Ascending aorta (tissue), 2 donors: ENCODE measurements at regions of chr13 and their contacts with region 1.

Region 1: DNA sequence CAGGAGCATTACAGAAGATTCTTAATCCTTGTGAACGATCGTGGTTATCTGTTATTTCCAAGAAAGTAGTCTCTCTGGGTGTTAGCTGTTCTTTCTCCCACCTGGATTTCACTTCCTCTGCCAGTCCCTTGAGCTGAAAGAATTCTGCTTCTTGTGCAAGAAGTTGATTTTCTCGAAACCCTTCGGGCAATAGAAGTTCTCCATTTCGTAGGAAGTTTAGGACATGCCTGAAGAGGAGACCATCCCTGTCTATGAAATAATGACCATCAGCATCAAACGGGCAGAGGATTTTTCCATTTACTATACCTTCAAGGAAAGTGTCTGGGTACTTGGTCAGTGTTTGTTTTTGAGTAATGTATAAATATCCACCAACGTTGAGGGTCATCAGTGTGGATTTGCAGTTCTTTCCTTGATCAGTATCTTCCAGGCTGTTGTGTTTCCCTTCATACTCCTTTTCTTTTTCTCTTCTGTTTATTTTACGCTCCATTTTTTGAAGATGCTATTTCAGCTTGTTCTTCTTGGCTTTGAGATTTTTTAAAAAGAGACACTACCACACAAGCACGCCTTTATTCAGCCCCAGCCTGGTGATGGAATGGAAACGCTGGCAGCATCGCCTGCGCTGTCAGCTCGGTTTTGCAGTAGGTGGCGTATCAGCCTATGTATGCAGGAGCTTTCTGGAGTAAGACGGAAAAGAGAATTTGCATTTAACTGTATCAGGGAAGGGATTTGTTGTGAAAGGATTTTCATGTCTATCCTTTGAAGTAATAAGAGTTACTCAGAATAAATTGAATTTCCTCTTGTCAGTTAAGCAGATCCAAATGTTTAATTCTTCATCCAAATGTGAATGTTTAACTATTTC is 6.5 kb downstream of the KCTD4 start:
- DNase-seq: peak in 1 of 2 donors; percentile 73
- H3K4me3 ChIP-seq: no peak overlapping the region
- H3K27ac ChIP-seq: no peak overlapping the region
- H3K4me1 ChIP-seq: peaks cover 0 to 12% of the 10 kb centered on the region in 2 donors
- H3K27me3 ChIP-seq: no peaks in the 10 kb centered on the region
- CTCF ChIP-seq: peak; percentile 5 to 60 (median 38)

Region 2: GRCh38 chr13:44449999-44450708 is 744.2 kb before region 1 on chr13:
- intact Hi-C with region 1: no loop called
- DNase-seq: no peak
- H3K4me3 ChIP-seq: no peak overlapping the region
- H3K27ac ChIP-seq: no peak overlapping the region
- H3K4me1 ChIP-seq: no peaks in the 10 kb centered on the region
- H3K27me3 ChIP-seq: no peaks in the 10 kb centered on the region
- CTCF ChIP-seq: no peak

Region 3: DNA sequence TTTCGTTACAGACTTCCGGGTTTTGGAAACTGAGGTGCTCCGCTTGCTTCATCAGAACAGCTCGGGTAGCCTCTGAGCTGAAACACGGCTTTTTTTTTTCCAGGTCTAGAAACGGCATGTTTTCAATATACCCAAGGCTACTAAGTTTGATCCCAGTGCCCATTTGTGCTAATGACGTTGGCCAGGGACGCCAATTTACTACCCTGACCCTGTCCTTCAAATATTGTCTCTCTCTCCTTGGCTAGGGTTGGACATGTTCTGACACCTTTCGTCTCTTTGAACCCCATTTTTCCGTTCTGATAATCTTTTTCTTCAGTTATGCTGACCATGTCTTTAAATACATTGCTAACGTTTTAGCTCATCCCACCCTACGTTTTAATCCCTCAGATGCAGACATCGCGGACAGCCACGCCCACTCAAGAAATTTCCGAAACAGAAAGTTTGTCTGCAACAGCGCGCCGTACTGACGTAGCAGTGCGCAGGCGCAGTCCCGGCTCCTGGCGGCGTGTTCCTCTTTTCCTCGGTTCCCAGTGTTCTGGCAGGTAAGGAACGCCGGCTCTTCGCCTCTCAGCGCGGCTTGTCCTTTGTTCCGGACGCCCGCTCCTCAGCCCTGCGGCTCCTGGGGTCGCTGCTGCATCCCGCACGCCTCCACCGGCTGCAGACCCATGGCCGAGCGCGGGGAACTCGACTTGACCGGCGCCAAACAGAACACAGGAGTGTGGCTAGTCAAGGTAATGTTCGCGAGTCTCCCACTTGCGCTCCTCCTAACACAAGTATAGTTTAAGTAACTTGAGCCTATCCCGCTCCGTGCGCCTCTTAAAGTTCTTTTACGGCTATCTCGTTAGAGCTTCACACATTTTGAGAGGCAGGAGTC is 74.1 kb before region 1 on chr13 and contains the start of gene GTF2F2:
- intact Hi-C with region 1: no loop called
- DNase-seq: peak; percentile 47 to 92
- H3K4me3 ChIP-seq: peak within 1 kb of the TSS; percentile 71 to 94
- H3K27ac ChIP-seq: peak within 1 kb of the TSS; percentile 75
- H3K4me1 ChIP-seq: peaks cover 0 to 15% of the 10 kb centered on the region in 2 donors
- H3K27me3 ChIP-seq: no peaks in the 10 kb centered on the region
- CTCF ChIP-seq: no peak
- total RNA-seq, gene GTF2F2: 6.4 TPM

Region 4: GRCh38 chr13:45280751-45281634 is 86.7 kb after region 1 on chr13:
- intact Hi-C with region 1: loop called (anchors 1 kb)
- DNase-seq: peak in 1 of 2 donors; percentile 73
- H3K4me3 ChIP-seq: no peak overlapping the region
- H3K27ac ChIP-seq: no peak overlapping the region
- H3K4me1 ChIP-seq: peaks cover 0 to 4% of the 10 kb centered on the region in 2 donors
- H3K27me3 ChIP-seq: no peaks in the 10 kb centered on the region
- CTCF ChIP-seq: peak; percentile 58 to 79 (median 67)

Region 5: GRCh38 chr13:45417790-45418534 is 223.7 kb after region 1 on chr13 and contains the start of gene SLC25A30:
- intact Hi-C with region 1: no loop called
- DNase-seq: peak; percentile 87 to 97
- H3K4me3 ChIP-seq: peak within 1 kb of the TSS; percentile 70 to 80
- H3K27ac ChIP-seq: peak within 1 kb of the TSS; percentile 83 to 85
- H3K4me1 ChIP-seq: peaks cover 0 to 7% of the 10 kb centered on the region in 2 donors
- H3K27me3 ChIP-seq: no peaks in the 10 kb centered on the region
- CTCF ChIP-seq: no peak
- total RNA-seq, gene SLC25A30: 1.9 TPM